Activated CD4-positive, alpha-beta T cell treated with anti-CD3 and anti-CD28 coated beads, Interleukin-2, amount 10 ng/mL, durations not matched to agents 24 days and 14 days (primary cell): ENCODE measurements at regions of chr10 and their contacts with region 1.

Region 1: DNA sequence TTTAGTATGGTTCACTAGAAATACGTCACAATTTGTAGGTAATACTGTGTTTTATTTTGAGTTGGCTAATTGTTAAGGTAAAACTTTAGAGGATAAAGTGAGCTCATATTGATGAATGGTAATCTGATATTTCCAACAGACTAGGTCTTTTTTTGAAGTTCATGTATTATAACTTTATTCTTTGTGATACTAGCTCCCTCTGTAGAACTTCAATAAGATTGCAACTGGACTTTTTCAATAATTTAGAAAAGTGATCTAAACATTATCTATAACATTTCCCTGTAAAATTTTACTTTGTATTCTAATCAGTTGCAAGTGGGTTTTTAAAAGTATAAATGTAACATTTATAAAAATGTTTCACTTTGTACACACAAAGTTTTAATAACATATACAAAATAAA is 83.5 kb downstream of the ADK start:
- DNase-seq: no peak
- H3K4me3 Mint-ChIP-seq: no peak overlapping the region
- H3K27ac Mint-ChIP-seq: no peak overlapping the region
- H3K4me1 Mint-ChIP-seq: peaks cover 16% of the 10 kb centered on the region
- H3K27me3 Mint-ChIP-seq: no peaks in the 10 kb centered on the region

Region 2: GRCh38 chr10:73879296-73880173 is 355.0 kb before region 1 on chr10:
- intact Hi-C with region 1: loop called (anchors 10 kb)
- DNase-seq: peak; percentile 98
- H3K4me3 Mint-ChIP-seq: peak overlapping the region; percentile 3
- H3K27ac Mint-ChIP-seq: peak overlapping the region; percentile 61
- H3K4me1 Mint-ChIP-seq: peaks cover 31% of the 10 kb centered on the region
- H3K27me3 Mint-ChIP-seq: peaks cover 4% of the 10 kb centered on the region

Region 3: GRCh38 chr10:74151056-74151878 is 83.3 kb before region 1 on chr10 and contains the start of gene ADK:
- intact Hi-C with region 1: loop called (anchors 2 kb)
- DNase-seq: peak; percentile 100
- H3K4me3 Mint-ChIP-seq: no peak within 1 kb of the TSS
- H3K27ac Mint-ChIP-seq: no peak within 1 kb of the TSS
- H3K4me1 Mint-ChIP-seq: peaks cover 28% of the 10 kb centered on the region
- H3K27me3 Mint-ChIP-seq: no peaks in the 10 kb centered on the region
- total RNA-seq, gene ADK: 54.8 and 58.3 TPM in 2 replicates